Heart left ventricle (tissue), 16 donors: ENCODE measurements at regions of chr1 and their contacts with region 1.

Region 1: GRCh38 chr1:117121776-117122697 is 488 bp upstream of the TRIM45 start:
- DNase-seq: peak; percentile 97 to 98 (median 97)
- ATAC-seq: peak; percentile 98 to 99 (median 98)
- H3K4me3 ChIP-seq: peak overlapping the region; percentile 40 to 88 (median 75)
- H3K27ac ChIP-seq: peak overlapping the region; percentile 88 to 99 (median 94)
- H3K4me1 ChIP-seq: peaks cover 0 to 44% (median 19%) of the 10 kb centered on the region in 12 donors
- H3K27me3 ChIP-seq: no peaks in the 10 kb centered on the region
- CTCF ChIP-seq: peak; percentile 58 to 98 (median 80)
- POLR2A ChIP-seq: no peak

Region 2: GRCh38 chr1:117067533-117068370 is 54.3 kb before region 1 on chr1:
- intact Hi-C with region 1: loop called in 7 of 10 experiments (anchors 2 to 10 kb)
- DNase-seq: peak; percentile 43 to 64 (median 47)
- ATAC-seq: peak; percentile 58 to 92 (median 90)
- H3K4me3 ChIP-seq: no peak overlapping the region
- H3K27ac ChIP-seq: no peak overlapping the region
- H3K4me1 ChIP-seq: no peaks in the 10 kb centered on the region
- H3K27me3 ChIP-seq: no peaks in the 10 kb centered on the region
- CTCF ChIP-seq: peak; percentile 65 to 88 (median 79)
- POLR2A ChIP-seq: no peak

Region 3: DNA sequence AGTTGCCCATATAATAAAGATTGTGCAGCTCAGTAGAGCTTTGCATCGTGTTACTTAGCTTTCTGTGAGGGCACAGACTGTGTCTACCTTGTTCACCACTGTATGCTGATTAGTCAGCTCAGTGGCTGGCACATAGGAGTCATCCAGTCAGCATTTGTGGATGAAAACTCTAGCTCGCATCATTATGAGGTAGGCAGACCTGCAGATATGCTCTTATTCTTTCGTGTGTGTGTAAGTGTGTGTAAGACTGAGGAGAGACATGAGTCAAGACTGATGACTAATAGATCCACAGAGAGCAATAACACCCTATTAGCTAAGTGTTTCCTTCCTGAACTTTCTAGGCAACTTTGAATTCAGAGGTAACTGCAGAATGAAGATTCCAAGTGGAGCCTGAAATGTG is 44.8 kb before region 1 on chr1:
- intact Hi-C with region 1: loop called in 3 of 10 experiments (anchors 5 to 10 kb)
- DNase-seq: no peak
- ATAC-seq: peak in 2 of 4 donors; percentile 29 to 50
- H3K4me3 ChIP-seq: no peak overlapping the region
- H3K27ac ChIP-seq: no peak overlapping the region
- H3K4me1 ChIP-seq: peaks cover 0 to 4% (median 0%) of the 10 kb centered on the region in 12 donors
- H3K27me3 ChIP-seq: no peaks in the 10 kb centered on the region
- CTCF ChIP-seq: no peak
- POLR2A ChIP-seq: no peak

Region 4: GRCh38 chr1:117231748-117232373 is 109.8 kb after region 1 on chr1:
- intact Hi-C with region 1: loop called in 2 of 10 experiments (anchors 5 to 10 kb)
- DNase-seq: no peak
- ATAC-seq: peak in 3 of 4 donors; percentile 8 to 37 (median 18)
- H3K4me3 ChIP-seq: no peak overlapping the region
- H3K27ac ChIP-seq: peak overlapping the region; percentile 24 to 91 (median 71)
- H3K4me1 ChIP-seq: peaks cover 0 to 21% (median 9%) of the 10 kb centered on the region in 12 donors
- H3K27me3 ChIP-seq: no peaks in the 10 kb centered on the region
- CTCF ChIP-seq: no peak
- POLR2A ChIP-seq: no peak

Region 5: GRCh38 chr1:117237696-117238381 is 115.8 kb after region 1 on chr1:
- intact Hi-C with region 1: loop called in 2 of 10 experiments (anchors 5 to 10 kb)
- DNase-seq: no peak
- ATAC-seq: no peak
- H3K4me3 ChIP-seq: no peak overlapping the region
- H3K27ac ChIP-seq: no peak overlapping the region
- H3K4me1 ChIP-seq: peaks cover 0 to 19% (median 5%) of the 10 kb centered on the region in 12 donors
- H3K27me3 ChIP-seq: no peaks in the 10 kb centered on the region
- CTCF ChIP-seq: no peak
- POLR2A ChIP-seq: no peak

Region 6: GRCh38 chr1:117284399-117285215 is 162.6 kb after region 1 on chr1:
- intact Hi-C with region 1: loop called in 9 of 10 experiments (anchors 2 to 10 kb)
- DNase-seq: no peak
- ATAC-seq: peak; percentile 55 to 80 (median 72)
- H3K4me3 ChIP-seq: no peak overlapping the region
- H3K27ac ChIP-seq: no peak overlapping the region
- H3K4me1 ChIP-seq: no peaks in the 10 kb centered on the region
- H3K27me3 ChIP-seq: no peaks in the 10 kb centered on the region
- CTCF ChIP-seq: peak; percentile 16 to 66 (median 54)
- POLR2A ChIP-seq: no peak

Region 7: DNA sequence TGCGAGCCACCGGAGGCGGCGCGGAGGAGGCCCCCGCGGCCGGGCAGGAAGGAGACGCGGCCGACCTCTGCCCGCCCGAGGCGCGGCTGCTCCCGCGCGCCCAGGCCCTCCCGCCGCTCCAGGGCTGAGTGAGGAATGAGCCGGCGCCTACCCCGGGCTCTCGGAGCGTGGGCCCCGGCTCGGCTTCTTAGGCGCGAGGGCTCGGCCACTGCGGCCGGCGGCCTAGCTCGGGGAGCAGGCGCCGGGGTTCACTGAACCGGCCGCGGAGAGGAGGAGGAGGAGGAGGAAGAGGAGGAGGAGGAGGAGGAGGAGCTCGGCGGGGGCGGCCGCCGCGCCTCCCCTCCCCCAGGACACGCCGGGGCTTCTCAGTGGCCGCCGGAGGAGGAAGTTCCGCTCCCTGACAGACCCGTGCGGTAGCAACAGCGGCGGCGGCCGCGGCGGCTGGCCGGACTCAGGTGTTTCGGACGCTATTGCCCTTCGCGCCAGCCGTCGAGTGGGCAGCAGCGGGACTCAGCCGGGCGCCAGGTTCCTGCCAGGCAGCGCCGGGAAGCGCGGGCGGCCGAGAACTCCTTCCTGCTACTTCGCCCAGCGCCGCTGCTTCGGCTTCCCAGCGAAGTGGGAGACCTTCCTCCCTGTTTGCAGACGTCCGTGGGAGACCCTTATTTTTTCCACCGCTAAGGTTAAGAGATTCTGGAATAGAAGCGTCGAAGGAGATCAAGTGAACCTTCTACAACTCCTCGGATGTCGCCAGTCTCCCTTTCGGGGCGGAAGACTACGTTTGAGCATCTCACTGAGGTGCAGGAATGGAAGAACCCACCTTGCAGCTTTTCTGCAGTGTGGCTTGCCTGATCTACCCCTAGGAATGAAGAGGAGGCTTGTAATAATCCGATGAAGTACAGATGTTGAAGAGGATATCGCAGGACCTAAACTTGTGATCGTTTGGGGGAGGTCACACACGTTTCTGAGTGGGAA is 245.3 kb after region 1 on chr1 and contains the start of gene MAN1A2:
- intact Hi-C with region 1: loop called in 5 of 10 experiments (anchors 2 to 5 kb)
- DNase-seq: peak; percentile 92 to 95 (median 93)
- ATAC-seq: peak; percentile 92 to 97 (median 96)
- H3K4me3 ChIP-seq: peak within 1 kb of the TSS; percentile 73 to 94 (median 88)
- H3K27ac ChIP-seq: peak within 1 kb of the TSS; percentile 90 to 99 (median 99)
- H3K4me1 ChIP-seq: peaks cover 4 to 60% (median 36%) of the 10 kb centered on the region in 12 donors
- H3K27me3 ChIP-seq: no peaks in the 10 kb centered on the region
- CTCF ChIP-seq: no peak
- POLR2A ChIP-seq: peak in 1 of 2 donors; percentile 81
- total RNA-seq, gene MAN1A2: 15.8 to 36.5 (median 23.9) TPM